Common myeloid progenitor, CD34-positive (primary cell): ENCODE measurements at regions of chr2 and their contacts with region 1.

Region 1: GRCh38 chr2:74725287-74725686 is 71.2 kb downstream of the SEMA4F start:
- DNase-seq: no peak
- H3K4me3 ChIP-seq: no peak overlapping the region
- H3K27ac ChIP-seq: no peak overlapping the region
- H3K4me1 ChIP-seq: no peaks in the 10 kb centered on the region
- H3K27me3 ChIP-seq: no peaks in the 10 kb centered on the region

Region 2: DNA sequence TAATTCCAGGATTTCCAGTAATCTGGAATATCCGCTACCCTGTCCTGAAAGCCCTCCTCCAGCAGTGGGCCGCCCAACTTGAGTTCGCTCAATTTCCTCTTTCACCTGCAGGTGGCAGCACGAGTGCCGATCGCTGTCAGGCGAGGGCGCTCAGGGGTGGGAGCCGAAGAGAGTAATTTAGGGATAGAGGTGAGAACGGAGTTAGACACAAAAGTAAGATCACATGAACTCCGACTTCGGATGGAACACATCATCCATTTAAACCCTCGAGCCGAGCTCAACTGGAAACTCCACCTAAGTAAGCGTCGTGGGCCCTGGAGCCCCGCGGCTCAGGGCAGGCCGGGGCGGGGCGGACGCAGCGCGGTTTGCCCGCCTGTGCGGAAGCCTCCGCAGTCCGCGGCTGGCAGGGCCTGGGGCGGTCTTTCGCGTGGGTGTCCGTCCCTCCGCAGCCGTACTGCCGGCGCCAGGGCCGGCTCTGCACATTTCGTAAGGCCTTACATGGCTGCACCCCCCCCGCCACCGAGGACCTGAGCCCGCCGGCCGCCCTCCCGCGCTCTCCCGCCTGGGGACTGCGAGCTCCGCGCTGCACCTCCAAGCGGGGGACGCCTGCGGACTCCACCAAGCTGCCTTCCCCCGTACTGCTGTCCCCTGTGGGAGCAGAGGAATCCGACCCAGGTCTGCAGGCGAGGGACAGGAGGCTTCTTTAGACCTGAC is 10.1 kb before region 1 on chr2:
- CTCF ChIA-PET with region 1: interaction called, 13 read pairs
- POLR2A ChIA-PET with region 1: no interaction called
- DNase-seq: peak; percentile 75 to 87 (median 84)
- H3K4me3 ChIP-seq: peak overlapping the region; percentile 27 to 78 (median 71)
- H3K27ac ChIP-seq: no peak overlapping the region
- H3K4me1 ChIP-seq: peaks cover 0 to 9% (median 5%) of the 10 kb centered on the region in 4 experiments
- H3K27me3 ChIP-seq: peaks cover 0 to 6% (median 0%) of the 10 kb centered on the region in 5 experiments

Region 3: DNA sequence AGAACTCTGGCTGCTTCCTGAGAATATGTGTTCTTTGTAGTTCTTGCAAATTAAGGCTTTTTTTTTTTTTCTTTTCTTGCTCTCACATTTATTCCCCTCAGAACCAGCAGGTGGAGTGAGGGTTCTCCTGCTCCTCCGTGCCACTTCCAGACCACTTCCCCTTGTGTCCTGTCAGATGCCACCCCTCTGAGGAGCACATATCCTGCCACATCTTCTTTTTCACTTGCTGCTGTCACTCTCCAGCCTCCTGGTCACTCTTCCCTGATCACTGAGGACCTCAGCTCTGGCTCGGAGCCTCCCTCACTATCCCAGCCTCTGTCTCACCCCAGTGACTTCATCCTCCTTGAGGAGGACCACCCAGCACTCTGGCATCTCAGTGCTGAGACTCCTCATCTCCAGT is 373.6 kb after region 1 on chr2:
- CTCF ChIA-PET with region 1: no interaction called
- POLR2A ChIA-PET with region 1: no interaction called
- DNase-seq: peak; percentile 23 to 64 (median 61)
- H3K4me3 ChIP-seq: no peak overlapping the region
- H3K27ac ChIP-seq: no peak overlapping the region
- H3K4me1 ChIP-seq: no peaks in the 10 kb centered on the region
- H3K27me3 ChIP-seq: no peaks in the 10 kb centered on the region